Cardiac septum (tissue), 1 donor: ENCODE measurements at regions of chr12 and their contacts with region 1.

Region 1: DNA sequence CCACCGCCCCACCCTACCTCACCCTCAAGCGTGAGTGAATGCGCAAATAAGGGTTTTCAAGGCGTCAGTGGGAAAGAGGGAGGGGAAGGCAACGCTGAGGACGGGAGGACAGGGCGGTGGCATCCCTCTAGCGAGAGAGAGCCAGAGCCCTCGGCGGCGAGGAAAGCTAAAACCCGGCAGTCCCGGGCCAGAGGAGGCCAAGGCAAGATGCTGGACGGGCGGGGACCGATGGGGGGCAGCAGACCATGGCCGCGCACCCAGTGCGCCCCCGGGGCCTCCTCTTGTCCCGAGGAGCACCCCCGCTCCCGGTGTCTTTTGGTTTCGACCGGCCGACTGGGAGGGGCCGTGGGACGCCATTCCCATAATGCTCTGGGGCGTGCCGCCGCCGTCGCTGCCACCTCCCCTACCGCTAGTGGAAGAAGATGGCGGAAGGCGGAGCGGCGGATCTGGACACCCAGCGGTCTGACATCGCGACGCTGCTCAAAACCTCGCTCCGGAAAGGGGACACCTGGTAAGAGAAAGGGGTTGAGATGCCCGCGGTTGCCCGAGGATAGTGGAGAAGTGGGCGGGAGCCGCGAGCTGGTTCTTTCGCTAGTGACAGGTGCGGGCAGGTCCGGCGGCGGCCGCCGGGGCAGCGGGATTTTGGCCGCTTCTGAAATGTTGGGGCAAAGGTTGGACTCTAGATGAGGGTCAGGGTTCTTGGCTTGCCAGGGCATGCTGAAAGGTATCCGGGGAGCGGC is at the start of gene USP15:
- DNase-seq: peak; percentile 98
- total RNA-seq, gene USP15: 62.6 TPM

Region 2: GRCh38 chr12:62319058-62319457 is 58.9 kb after region 1 on chr12:
- intact Hi-C with region 1: loop called (anchors 10 kb)
- DNase-seq: no peak

Region 3: GRCh38 chr12:62396750-62397149 is 136.6 kb after region 1 on chr12:
- intact Hi-C with region 1: no loop called
- DNase-seq: no peak

Region 4: DNA sequence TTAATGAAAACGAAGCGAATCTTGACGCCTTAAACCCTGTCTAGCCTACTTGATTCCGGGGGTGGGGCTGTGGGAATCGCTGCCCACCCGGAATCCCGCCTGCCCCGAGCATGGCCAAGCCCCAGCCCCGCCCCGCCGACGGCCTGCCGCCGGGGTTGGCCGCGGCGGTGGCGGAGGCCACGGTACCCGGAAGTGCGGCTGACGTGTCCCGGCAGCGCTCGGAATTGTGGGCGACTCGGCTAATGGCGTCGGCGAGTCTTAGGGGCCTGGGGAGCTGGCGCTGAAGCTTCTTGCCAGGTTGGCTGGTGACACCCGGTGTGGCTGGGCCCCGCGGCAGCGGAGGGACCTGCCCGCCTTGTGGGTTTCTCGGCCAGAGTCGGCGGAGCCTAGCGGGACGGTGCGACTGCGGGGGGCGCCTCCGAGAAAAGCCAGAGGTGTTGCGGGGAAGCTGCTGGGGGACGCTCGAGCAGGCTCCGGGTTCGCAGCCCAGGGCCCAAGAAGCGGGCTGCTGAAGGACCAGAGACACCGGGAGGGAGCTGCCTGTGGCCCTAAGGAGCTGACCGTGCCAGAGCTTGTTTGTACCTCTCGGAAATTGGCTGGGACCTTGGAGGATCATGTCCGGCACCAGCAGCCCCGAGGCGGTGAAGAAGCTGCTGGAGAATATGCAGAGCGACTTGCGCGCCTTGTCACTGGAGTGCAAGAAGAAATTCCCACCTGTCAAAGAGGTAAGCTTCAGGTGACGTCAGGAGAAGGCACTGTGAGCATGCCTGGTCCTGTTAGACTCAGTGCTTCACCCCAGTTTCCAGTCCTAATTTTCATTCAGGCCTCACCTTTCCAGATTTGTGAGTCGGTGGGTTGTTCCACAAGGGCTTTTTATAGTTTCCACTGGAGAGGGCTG is 206.7 kb after region 1 on chr12 and contains the start of gene MON2:
- intact Hi-C with region 1: loop called (anchors 5 kb)
- DNase-seq: peak; percentile 95
- total RNA-seq, gene MON2: 26.4 TPM